ENCODE measurements at regions of chr7 and their contacts with region 1.

Region 1: GRCh38 chr7:43700059-43700501 is 29.2 kb downstream of the COA1 start:
- DNase-seq: no peak
- H3K4me3 ChIP-seq: no peak overlapping the region
- H3K27ac ChIP-seq: no peak overlapping the region
- H3K4me1 ChIP-seq: no peaks in the 10 kb centered on the region
- H3K27me3 ChIP-seq: no peaks in the 10 kb centered on the region
- CTCF ChIP-seq: peak; percentile 35 to 85 (median 76)
- POLR2A ChIP-seq: no peak

Region 2: GRCh38 chr7:43647673-43648472 is 52.2 kb before region 1 on chr7:
- intact Hi-C with region 1: loop called (anchors 5 kb)
- DNase-seq: peak; percentile 77
- H3K4me3 ChIP-seq: no peak overlapping the region
- H3K27ac ChIP-seq: peak overlapping the region; percentile 72 to 83
- H3K4me1 ChIP-seq: peaks cover 9% of the 10 kb centered on the region
- H3K27me3 ChIP-seq: no peaks in the 10 kb centered on the region
- CTCF ChIP-seq: no peak
- POLR2A ChIP-seq: no peak

Region 3: GRCh38 chr7:43834463-43835251 is 134.6 kb after region 1 on chr7:
- intact Hi-C with region 1: loop called (anchors 5 kb)
- DNase-seq: no peak
- H3K4me3 ChIP-seq: no peak overlapping the region
- H3K27ac ChIP-seq: no peak overlapping the region
- H3K4me1 ChIP-seq: no peaks in the 10 kb centered on the region
- H3K27me3 ChIP-seq: no peaks in the 10 kb centered on the region
- CTCF ChIP-seq: no peak
- POLR2A ChIP-seq: no peak

Region 4: DNA sequence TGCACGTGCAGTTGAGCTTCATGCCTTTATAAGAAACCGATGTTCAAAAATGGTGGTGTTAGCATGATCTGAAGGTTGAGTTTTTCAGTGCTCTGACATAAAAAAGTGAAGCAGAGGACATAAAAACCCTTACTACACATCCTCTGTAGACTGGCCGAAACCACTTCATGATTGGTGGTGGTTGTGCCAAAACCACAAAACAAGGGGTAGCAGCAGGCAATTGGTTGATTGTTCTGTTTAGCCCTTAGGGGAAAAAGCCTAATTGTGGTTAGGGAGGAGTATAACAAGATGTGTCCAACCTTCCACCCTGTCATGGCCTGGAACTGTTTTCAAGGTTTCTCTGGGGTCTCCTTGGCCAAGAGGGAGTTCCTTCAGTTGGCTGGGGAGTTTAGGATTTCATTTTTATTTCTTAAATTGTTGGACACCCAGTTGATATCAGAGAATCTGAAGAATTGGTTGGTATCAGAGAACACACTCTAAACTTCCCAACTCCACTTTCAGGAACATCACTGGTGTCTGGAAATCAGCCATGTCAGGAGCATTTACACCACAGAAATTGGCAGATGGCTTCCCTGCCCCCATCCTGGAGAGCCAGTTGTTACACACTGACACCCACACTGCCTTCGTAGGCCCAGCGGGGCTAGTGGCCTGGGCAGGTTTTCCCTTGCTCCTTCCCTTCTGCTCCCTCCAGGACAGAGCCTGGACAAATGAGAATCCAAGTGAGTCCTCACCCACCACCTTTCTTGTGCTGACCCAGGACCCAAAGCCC is 150.5 kb after region 1 on chr7:
- intact Hi-C with region 1: no loop called
- DNase-seq: no peak
- H3K4me3 ChIP-seq: no peak overlapping the region
- H3K27ac ChIP-seq: no peak overlapping the region
- H3K4me1 ChIP-seq: no peaks in the 10 kb centered on the region
- H3K27me3 ChIP-seq: no peaks in the 10 kb centered on the region
- CTCF ChIP-seq: no peak
- POLR2A ChIP-seq: no peak